ENCODE measurements at regions of chr3 and their contacts with region 1.

Region 1: GRCh38 chr3:197586181-197586580 is 30.4 kb upstream of the BDH1 start:
- DNase-seq: no peak
- ATAC-seq: no peak
- H3K4me3 ChIP-seq: no peak overlapping the region
- H3K4me3 Mint-ChIP-seq: no peak overlapping the region
- H3K27ac ChIP-seq: no peak overlapping the region
- H3K27ac Mint-ChIP-seq: no peak overlapping the region
- H3K4me1 ChIP-seq: no peaks in the 10 kb centered on the region
- H3K4me1 Mint-ChIP-seq: no peaks in the 10 kb centered on the region
- H3K27me3 ChIP-seq: no peaks in the 10 kb centered on the region
- H3K27me3 Mint-ChIP-seq: peaks cover 3% of the 10 kb centered on the region
- CTCF ChIP-seq: no peak

Region 2: DNA sequence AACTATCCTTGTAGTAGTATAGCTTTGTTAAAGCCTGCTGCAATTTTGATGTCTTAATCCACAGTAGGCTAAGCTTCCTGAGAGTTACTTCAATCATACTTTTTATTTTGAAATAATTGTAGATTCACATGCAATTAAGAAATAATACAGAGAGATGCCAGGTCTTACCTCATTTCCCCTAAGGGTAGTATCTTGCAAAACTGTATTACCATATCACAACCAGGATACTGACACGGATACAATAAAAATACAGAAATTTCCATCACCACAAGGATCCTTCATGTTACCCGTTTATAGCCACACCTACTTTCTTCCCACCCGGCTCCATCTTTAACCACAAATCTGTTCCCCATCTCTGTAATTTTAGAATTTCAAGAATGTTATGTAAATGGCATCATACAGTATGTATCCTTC is 52.2 kb before region 1 on chr3:
- CTCF ChIA-PET with region 1: no interaction called
- POLR2A ChIA-PET with region 1: no interaction called
- intact Hi-C with region 1: no loop called
- DNase-seq: no peak
- ATAC-seq: no peak
- H3K4me3 ChIP-seq: no peak overlapping the region
- H3K4me3 Mint-ChIP-seq: no peak overlapping the region
- H3K27ac ChIP-seq: no peak overlapping the region
- H3K27ac Mint-ChIP-seq: no peak overlapping the region
- H3K4me1 ChIP-seq: no peaks in the 10 kb centered on the region
- H3K4me1 Mint-ChIP-seq: no peaks in the 10 kb centered on the region
- H3K27me3 ChIP-seq: no peaks in the 10 kb centered on the region
- H3K27me3 Mint-ChIP-seq: no peaks in the 10 kb centered on the region
- CTCF ChIP-seq: no peak

Region 3: DNA sequence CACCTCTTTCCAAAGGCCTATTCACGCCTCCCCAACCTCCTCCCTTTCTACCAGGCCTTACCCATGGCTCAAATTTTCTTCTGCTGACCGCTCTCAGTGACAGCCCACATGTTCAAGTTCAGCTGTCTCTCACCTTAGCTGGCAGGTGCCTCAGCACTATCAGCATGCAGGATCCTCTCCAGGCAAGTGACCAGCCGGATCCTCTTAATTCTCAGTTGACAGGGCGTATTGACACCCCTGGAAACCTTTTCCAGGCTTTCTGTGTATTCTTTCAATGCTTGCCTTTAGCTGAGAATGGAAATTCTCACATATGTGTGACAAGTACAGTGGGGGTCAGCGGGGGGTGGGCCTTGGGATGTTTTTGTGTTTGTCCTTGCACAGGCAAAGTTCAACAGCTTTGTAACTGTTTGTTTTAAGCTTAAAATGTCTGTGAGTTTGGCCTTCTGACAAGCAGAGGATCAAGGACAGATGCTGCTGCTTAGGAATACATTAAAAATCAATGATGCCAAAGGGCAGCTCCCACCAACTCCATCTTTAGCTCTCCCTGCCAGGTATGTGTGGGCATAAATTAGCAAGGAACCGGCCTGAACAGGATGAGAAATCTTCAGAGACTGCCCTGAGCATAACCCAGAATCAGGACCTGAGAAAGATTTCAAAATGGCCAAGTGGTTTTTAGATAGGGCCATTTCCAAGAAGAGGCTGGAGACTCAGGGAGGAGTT is 13.0 kb before region 1 on chr3:
- CTCF ChIA-PET with region 1: interaction called, 3 read pairs
- POLR2A ChIA-PET with region 1: interaction called, 10 read pairs
- intact Hi-C with region 1: no loop called
- DNase-seq: no peak
- ATAC-seq: no peak
- H3K4me3 ChIP-seq: no peak overlapping the region
- H3K4me3 Mint-ChIP-seq: no peak overlapping the region
- H3K27ac ChIP-seq: no peak overlapping the region
- H3K27ac Mint-ChIP-seq: no peak overlapping the region
- H3K4me1 ChIP-seq: no peaks in the 10 kb centered on the region
- H3K4me1 Mint-ChIP-seq: no peaks in the 10 kb centered on the region
- H3K27me3 ChIP-seq: no peaks in the 10 kb centered on the region
- H3K27me3 Mint-ChIP-seq: peaks cover 24% of the 10 kb centered on the region
- CTCF ChIP-seq: no peak

Region 4: GRCh38 chr3:197682713-197683112 is 96.5 kb after region 1 on chr3:
- CTCF ChIA-PET with region 1: no interaction called
- POLR2A ChIA-PET with region 1: no interaction called
- intact Hi-C with region 1: loop called in 1 of 2 experiments (anchors 5 kb)
- DNase-seq: peak in 1 of 9 experiments; percentile 18
- ATAC-seq: no peak
- H3K4me3 ChIP-seq: no peak overlapping the region
- H3K4me3 Mint-ChIP-seq: no peak overlapping the region
- H3K27ac ChIP-seq: no peak overlapping the region
- H3K27ac Mint-ChIP-seq: no peak overlapping the region
- H3K4me1 ChIP-seq: no peaks in the 10 kb centered on the region
- H3K4me1 Mint-ChIP-seq: no peaks in the 10 kb centered on the region
- H3K27me3 ChIP-seq: no peaks in the 10 kb centered on the region
- H3K27me3 Mint-ChIP-seq: no peaks in the 10 kb centered on the region
- CTCF ChIP-seq: no peak